B cell (primary cell): ENCODE measurements at regions of chr7 and their contacts with region 1.

Region 1: GRCh38 chr7:43454936-43455518 is 127.9 kb upstream of the STK17A start:
- DNase-seq: peak; percentile 43
- ATAC-seq: no peak
- H3K4me3 ChIP-seq: no peak overlapping the region
- H3K4me3 Mint-ChIP-seq: no peak overlapping the region
- H3K27ac ChIP-seq: no peak overlapping the region
- H3K27ac Mint-ChIP-seq: no peak overlapping the region
- H3K4me1 ChIP-seq: no peaks in the 10 kb centered on the region
- H3K4me1 Mint-ChIP-seq: peaks cover 5% of the 10 kb centered on the region
- H3K27me3 ChIP-seq: no peaks in the 10 kb centered on the region
- H3K27me3 Mint-ChIP-seq: peaks cover 11% of the 10 kb centered on the region
- CTCF ChIP-seq: peak; percentile 66

Region 2: GRCh38 chr7:43439631-43440401 is 15.2 kb before region 1 on chr7:
- CTCF ChIA-PET with region 1: interaction called, 13 read pairs
- POLR2A ChIA-PET with region 1: no interaction called
- intact Hi-C with region 1: no loop called
- DNase-seq: peak; percentile 60
- ATAC-seq: no peak
- H3K4me3 ChIP-seq: no peak overlapping the region
- H3K4me3 Mint-ChIP-seq: no peak overlapping the region
- H3K27ac ChIP-seq: no peak overlapping the region
- H3K27ac Mint-ChIP-seq: no peak overlapping the region
- H3K4me1 ChIP-seq: no peaks in the 10 kb centered on the region
- H3K4me1 Mint-ChIP-seq: no peaks in the 10 kb centered on the region
- H3K27me3 ChIP-seq: peaks cover 0 to 4% (median 0%) of the 10 kb centered on the region in 4 experiments
- H3K27me3 Mint-ChIP-seq: peaks cover 22% of the 10 kb centered on the region
- CTCF ChIP-seq: peak; percentile 75

Region 3: DNA sequence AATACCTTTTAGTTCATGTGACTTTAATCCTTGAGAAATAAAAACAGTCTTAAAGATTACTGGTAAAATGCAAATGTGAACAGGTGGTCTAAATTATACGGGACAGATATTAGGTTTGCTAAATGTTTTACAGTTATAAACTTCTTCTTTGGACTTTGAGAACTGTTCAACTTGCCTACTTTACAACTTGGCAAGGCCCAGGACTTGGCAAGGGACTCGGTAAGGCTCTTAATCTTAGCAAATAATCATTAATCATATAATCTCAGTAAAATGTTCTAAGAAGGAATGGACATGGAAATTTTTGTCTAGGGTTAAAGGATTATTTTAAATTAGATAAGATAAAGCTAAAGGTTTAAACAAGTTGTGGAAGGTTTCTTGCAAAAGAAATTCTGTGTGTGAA is 466.4 kb after region 1 on chr7:
- CTCF ChIA-PET with region 1: no interaction called
- POLR2A ChIA-PET with region 1: no interaction called
- intact Hi-C with region 1: no loop called
- DNase-seq: no peak
- ATAC-seq: no peak
- H3K4me3 ChIP-seq: no peak overlapping the region
- H3K4me3 Mint-ChIP-seq: no peak overlapping the region
- H3K27ac ChIP-seq: no peak overlapping the region
- H3K27ac Mint-ChIP-seq: no peak overlapping the region
- H3K4me1 ChIP-seq: peaks cover 5 to 13% of the 10 kb centered on the region in 2 donors
- H3K4me1 Mint-ChIP-seq: peaks cover 12% of the 10 kb centered on the region
- H3K27me3 ChIP-seq: no peaks in the 10 kb centered on the region
- H3K27me3 Mint-ChIP-seq: no peaks in the 10 kb centered on the region
- CTCF ChIP-seq: no peak